ENCODE measurements at regions of chr17 and their contacts with region 1.

Region 1: DNA sequence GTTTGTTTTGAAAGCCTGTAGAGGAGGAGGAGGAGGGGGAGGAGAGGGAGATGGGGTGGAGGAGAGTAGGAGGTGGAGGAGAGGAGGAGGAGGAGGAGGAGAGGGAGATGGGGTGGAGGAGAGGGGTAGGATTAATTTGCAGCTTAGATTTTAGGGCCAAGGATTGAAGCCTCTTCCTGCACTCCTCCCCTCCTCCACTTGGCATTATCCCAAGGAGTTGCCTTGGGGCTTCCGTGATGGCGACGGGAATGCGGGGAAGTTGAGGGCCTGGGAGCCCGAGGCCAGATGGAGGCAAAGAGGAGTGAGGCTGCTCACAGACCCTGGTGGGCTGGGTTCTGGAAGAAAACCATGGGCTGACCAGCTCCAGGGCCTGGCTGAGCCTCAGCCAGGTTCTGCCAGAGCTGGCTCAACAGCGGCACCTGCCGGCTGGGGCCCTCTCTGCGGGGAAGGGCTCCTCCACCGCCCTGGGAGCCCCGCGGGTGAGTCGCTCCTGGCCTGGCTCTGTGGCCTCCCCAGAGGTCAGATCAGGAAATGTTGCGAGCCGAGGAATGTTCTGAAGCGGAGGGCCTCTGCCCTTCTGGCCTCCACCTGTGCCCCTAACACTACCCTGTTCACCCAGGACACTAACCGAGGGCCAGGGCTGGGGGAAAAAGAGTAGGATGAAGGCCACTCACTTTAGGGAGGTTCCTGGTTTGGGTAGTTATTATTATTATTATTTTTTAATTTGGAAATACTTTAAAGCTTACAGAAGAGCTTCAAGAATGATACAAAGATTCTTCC is 23.9 kb upstream of the FMNL1 start:
- DNase-seq: peak; percentile 96
- ATAC-seq: peak; percentile 100
- H3K4me3 Mint-ChIP-seq: no peak overlapping the region
- H3K27ac Mint-ChIP-seq: no peak overlapping the region
- H3K4me1 Mint-ChIP-seq: peaks cover 4% of the 10 kb centered on the region
- H3K27me3 Mint-ChIP-seq: no peaks in the 10 kb centered on the region

Region 2: DNA sequence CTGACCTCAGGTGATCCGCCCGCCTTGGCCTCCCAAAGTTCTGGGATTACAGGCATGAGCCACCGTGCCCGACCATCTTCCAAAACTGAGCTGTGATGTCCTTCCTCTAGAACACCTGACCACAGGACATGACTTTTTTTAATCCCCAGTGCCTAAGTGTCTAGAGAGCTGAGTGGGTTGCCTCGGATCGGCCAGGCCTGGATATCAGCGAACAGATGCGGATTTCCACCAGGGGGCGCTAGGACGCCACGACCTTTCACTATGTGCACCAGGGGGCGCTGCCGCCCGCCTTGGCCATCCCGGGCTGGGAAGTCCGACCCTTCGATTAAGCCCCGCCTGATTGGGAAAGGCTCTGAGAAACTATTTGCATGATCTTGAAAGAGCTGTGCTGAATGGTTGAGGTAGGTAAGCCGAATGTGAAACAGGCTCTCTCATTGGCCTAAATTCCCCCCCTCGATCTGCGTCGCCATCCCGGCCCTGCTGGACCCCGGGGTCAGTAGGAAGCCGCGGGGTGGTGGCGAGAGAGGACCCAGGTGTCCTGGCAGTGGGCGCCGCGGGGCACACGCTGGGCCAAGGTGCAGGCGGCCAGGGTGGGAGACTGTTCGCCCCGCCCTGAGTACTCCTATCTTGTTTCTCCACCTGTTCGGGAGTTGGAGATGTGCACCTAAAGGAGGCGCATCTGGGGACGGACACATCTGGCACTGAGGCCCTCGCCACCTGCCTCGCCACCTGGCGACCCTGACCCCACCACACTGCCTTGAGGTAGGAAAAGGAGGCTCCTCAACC is 62.4 kb before region 1 on chr17 and contains the start of gene ACBD4:
- POLR2A ChIA-PET with region 1: interaction called, 13 read pairs
- DNase-seq: peak; percentile 99
- ATAC-seq: peak; percentile 91
- H3K4me3 Mint-ChIP-seq: peak within 1 kb of the TSS; percentile 94
- H3K27ac Mint-ChIP-seq: peak within 1 kb of the TSS; percentile 80
- H3K4me1 Mint-ChIP-seq: peaks cover 8% of the 10 kb centered on the region
- H3K27me3 Mint-ChIP-seq: peaks cover 11% of the 10 kb centered on the region
- total RNA-seq, gene ACBD4: 24.5 to 25.0 TPM

Region 3: DNA sequence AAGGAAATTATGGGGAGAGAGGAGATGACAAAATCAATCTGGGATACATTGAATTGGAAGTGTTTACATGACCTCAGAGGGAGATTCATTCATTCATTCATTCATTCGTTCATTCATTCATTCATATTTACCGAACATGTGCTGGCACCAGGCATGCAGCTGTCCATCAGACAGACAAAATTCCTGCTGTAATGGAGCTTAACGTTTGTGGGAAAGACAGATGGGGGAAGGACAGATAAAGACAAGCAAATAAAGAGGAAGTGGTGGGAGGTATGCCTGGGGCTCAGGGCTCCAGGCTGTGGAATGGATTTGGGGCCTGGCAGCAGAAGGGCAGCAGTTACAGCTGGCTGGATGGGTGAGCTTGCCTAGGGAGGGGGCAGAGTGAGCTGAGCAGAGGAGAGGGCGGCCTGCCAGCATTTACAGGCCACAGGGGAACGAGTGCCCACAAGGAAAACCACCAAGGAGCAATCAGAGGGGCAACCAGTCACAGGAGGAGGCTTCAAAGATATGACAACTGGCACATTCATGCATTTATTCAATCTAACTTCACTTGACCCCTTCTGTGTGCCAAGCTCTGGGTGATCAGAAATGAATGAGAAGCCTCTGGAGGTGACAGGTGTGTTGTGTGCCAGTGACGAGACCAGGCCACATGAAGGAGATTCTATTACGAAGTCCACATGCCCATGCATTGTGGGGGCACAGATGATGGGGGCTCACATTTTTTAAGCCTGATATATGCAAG is 186.5 kb after region 1 on chr17:
- POLR2A ChIA-PET with region 1: no interaction called
- DNase-seq: no peak
- ATAC-seq: no peak
- H3K4me3 Mint-ChIP-seq: no peak overlapping the region
- H3K27ac Mint-ChIP-seq: peak overlapping the region; percentile 57
- H3K4me1 Mint-ChIP-seq: peaks cover 33% of the 10 kb centered on the region
- H3K27me3 Mint-ChIP-seq: peaks cover 12% of the 10 kb centered on the region